Activated CD8-positive, alpha-beta T cell treated with anti-CD3 and anti-CD28 coated beads for 36 hours (primary cell): ENCODE measurements at regions of chr10 and their contacts with region 1.

Region 1: GRCh38 chr10:114499630-114500190 is 95.4 kb upstream of the AFAP1L2 start:
- DNase-seq: peak; percentile 93
- ATAC-seq: peak; percentile 66
- H3K4me3 Mint-ChIP-seq: peak overlapping the region; percentile 68
- H3K27ac Mint-ChIP-seq: peak overlapping the region; percentile 95
- H3K4me1 Mint-ChIP-seq: peaks cover 90% of the 10 kb centered on the region
- H3K27me3 Mint-ChIP-seq: no peaks in the 10 kb centered on the region
- CTCF ChIP-seq: no peak

Region 2: GRCh38 chr10:114486938-114487814 is 12.5 kb before region 1 on chr10:
- CTCF ChIA-PET with region 1: interaction called, 12 read pairs
- POLR2A ChIA-PET with region 1: interaction called, 5 read pairs
- intact Hi-C with region 1: no loop called
- DNase-seq: peak; percentile 50
- ATAC-seq: peak; percentile 72
- H3K4me3 Mint-ChIP-seq: no peak overlapping the region
- H3K27ac Mint-ChIP-seq: peak overlapping the region; percentile 76
- H3K4me1 Mint-ChIP-seq: peaks cover 56% of the 10 kb centered on the region
- H3K27me3 Mint-ChIP-seq: no peaks in the 10 kb centered on the region
- CTCF ChIP-seq: peak; percentile 42

Region 3: DNA sequence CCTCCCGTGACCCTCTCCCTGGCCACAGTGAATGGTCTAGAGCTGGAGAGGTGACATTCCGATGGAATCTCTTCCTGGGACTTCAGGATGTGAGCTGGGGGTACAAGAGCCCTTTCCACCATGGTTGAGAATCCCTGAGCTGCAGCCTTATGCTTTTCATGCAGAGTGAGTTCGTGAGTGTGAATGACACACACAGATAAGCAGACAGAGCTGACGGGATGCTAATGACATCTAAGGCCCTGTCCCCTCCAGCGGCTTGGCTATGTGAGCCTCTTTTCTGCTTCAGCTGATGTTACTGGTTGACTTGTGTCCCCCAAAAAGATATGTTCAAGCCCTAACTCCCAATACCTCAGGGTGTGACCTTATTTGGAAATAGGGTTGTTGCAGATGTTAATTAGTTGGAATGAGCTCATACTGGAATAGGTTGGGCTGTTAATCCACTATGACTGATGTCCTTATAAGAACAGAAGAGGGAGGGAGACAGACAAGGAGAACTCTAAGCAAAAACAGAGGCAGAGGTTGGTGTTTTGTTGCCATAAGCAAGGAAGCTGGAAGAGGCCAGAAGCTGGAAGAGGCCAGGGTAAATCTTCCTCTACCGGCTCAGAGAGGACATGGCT is 15.7 kb after region 1 on chr10:
- CTCF ChIA-PET with region 1: interaction called, 80 read pairs
- POLR2A ChIA-PET with region 1: interaction called, 138 read pairs
- intact Hi-C with region 1: loop called (anchors 2 kb)
- DNase-seq: no peak
- ATAC-seq: peak; percentile 46
- H3K4me3 Mint-ChIP-seq: peak overlapping the region; percentile 73
- H3K27ac Mint-ChIP-seq: peak overlapping the region; percentile 91
- H3K4me1 Mint-ChIP-seq: peaks cover 94% of the 10 kb centered on the region
- H3K27me3 Mint-ChIP-seq: no peaks in the 10 kb centered on the region
- CTCF ChIP-seq: no peak

Region 4: DNA sequence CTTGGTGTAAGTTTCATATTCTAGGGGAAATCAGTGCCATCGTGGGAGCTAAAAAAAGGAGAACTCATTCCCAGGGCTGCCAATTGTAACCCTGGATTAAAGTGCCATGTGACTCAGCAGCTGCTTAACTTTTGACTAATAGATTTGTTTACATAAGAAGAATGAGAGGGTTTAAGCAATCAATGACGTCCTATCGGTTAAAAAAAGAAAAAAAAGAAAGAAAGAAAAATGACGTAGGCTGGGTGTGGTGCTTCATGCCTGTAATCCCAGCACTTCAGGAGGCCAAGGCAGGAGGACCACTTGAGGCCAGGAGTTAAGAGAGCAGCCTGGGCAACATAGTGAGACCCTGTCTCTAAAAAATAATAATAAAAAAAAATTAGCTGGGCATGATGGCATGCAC is 20.7 kb after region 1 on chr10:
- CTCF ChIA-PET with region 1: interaction called, 80 read pairs
- POLR2A ChIA-PET with region 1: interaction called, 138 read pairs
- intact Hi-C with region 1: loop called (anchors 2 kb)
- DNase-seq: no peak
- ATAC-seq: peak; percentile 1
- H3K4me3 Mint-ChIP-seq: peak overlapping the region; percentile 59
- H3K27ac Mint-ChIP-seq: peak overlapping the region; percentile 91
- H3K4me1 Mint-ChIP-seq: peaks cover 91% of the 10 kb centered on the region
- H3K27me3 Mint-ChIP-seq: no peaks in the 10 kb centered on the region
- CTCF ChIP-seq: no peak

Region 5: GRCh38 chr10:114541081-114541796 is 41.5 kb after region 1 on chr10:
- CTCF ChIA-PET with region 1: interaction called, 4 read pairs
- POLR2A ChIA-PET with region 1: interaction called, 19 read pairs
- intact Hi-C with region 1: loop called (anchors 5 kb)
- DNase-seq: peak; percentile 89
- ATAC-seq: peak; percentile 83
- H3K4me3 Mint-ChIP-seq: peak overlapping the region; percentile 70
- H3K27ac Mint-ChIP-seq: peak overlapping the region; percentile 100
- H3K4me1 Mint-ChIP-seq: peaks cover 87% of the 10 kb centered on the region
- H3K27me3 Mint-ChIP-seq: no peaks in the 10 kb centered on the region
- CTCF ChIP-seq: no peak